GM18951 (cell line): ENCODE measurements at regions of chr12 and their contacts with region 1.

Region 1: GRCh38 chr12:4276524-4277204 is 3.1 kb downstream of the CCND2 start:
- POLR2A ChIP-seq: no peak

Region 2: GRCh38 chr12:4107436-4107878 is 169.2 kb before region 1 on chr12:
- in situ Hi-C with region 1: loop called (anchors 5 kb)
- POLR2A ChIP-seq: no peak

Region 3: DNA sequence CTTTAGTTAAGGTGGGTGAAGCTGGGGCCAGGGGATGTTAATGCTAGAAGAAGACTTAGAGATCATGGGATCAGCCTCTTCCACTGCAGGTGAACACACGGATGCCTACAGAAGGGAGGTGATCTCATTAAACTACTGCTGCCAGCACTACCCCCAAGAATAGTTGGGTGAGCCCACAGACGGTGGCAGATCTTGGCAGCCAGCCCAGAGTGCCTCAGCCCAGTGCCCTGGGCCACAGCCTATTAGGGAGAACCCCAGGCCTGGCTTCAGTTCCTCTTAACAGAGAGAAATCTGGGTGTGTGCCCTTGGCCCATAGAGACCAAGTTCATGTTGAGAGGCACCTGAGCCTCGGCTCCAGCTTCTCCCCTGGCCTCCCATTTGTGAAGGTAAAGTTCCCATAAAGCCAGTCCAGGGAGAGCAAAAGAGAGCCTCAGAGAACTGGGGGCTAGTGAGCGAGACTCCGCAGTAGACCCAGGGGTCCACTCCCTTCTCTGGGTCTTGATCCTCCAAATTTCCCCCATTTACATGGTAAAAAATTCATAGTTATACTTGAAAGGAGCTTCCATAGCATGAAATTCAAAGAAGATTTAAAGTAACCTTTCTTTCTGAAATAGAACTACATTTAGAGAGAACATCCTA is 128.1 kb before region 1 on chr12:
- in situ Hi-C with region 1: loop called (anchors 10 kb)
- POLR2A ChIP-seq: no peak

Region 4: GRCh38 chr12:4526923-4527546 is 250.4 kb after region 1 on chr12:
- in situ Hi-C with region 1: no loop called
- POLR2A ChIP-seq: no peak